ENCODE measurements at regions of chr1 and their contacts with region 1.

Region 1: DNA sequence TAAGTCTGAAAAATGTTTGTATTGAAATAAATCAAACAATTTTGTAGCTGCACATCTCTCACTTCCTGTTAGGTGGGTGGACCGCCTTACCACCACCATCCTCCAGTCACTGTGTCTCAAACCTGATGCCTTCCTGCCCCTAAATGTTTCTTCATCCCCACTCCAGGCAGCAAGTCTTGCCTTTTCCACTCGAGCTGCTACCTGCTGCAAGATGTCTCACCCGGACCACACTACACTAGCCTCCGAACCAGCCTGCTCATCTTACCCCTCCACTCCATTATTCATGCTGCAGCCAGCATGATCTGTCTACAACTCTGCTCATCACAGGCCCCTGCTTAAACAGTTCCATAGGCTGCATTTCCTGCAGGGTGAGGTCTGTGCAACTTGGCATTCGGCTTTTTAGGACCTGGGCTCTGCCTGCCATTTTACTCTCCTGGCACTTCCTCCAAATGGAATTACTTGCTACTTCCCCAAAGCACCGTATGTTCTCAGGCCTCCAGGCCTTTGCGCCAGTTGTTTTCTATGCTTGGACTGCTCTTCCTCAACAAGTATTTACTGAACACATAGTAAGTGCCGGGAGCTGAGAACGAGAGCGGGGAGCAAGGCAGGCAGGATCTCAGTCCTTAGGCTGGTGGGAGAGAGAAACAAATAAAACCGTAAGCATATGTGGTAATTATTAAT is 5.2 kb upstream of the SF3A3 start:
- DNase-seq: no peak
- ATAC-seq: no peak
- H3K4me3 ChIP-seq: peak overlapping the region in 6 of 10 donors; percentile 45 to 60 (median 56)
- H3K27ac ChIP-seq: peak overlapping the region in 9 of 10 donors; percentile 72 to 97 (median 83)
- H3K4me1 ChIP-seq: peaks cover 19 to 64% (median 49%) of the 10 kb centered on the region in 9 donors
- H3K27me3 ChIP-seq: no peaks in the 10 kb centered on the region
- CTCF ChIP-seq: no peak

Region 2: GRCh38 chr1:37133276-37134145 is 861.5 kb before region 1 on chr1:
- intact Hi-C with region 1: loop called in 1 of 10 experiments (anchors 5 kb)
- DNase-seq: no peak
- ATAC-seq: no peak
- H3K4me3 ChIP-seq: no peak overlapping the region
- H3K27ac ChIP-seq: no peak overlapping the region
- H3K4me1 ChIP-seq: no peaks in the 10 kb centered on the region
- H3K27me3 ChIP-seq: peaks cover 0 to 62% (median 32%) of the 10 kb centered on the region in 7 donors
- CTCF ChIP-seq: no peak

Region 3: GRCh38 chr1:37755290-37755689 is 239.7 kb before region 1 on chr1:
- intact Hi-C with region 1: no loop called
- DNase-seq: no peak
- ATAC-seq: no peak
- H3K4me3 ChIP-seq: no peak overlapping the region
- H3K27ac ChIP-seq: no peak overlapping the region
- H3K4me1 ChIP-seq: no peaks in the 10 kb centered on the region
- H3K27me3 ChIP-seq: peaks cover 0 to 93% (median 91%) of the 10 kb centered on the region in 7 donors
- CTCF ChIP-seq: no peak

Region 4: DNA sequence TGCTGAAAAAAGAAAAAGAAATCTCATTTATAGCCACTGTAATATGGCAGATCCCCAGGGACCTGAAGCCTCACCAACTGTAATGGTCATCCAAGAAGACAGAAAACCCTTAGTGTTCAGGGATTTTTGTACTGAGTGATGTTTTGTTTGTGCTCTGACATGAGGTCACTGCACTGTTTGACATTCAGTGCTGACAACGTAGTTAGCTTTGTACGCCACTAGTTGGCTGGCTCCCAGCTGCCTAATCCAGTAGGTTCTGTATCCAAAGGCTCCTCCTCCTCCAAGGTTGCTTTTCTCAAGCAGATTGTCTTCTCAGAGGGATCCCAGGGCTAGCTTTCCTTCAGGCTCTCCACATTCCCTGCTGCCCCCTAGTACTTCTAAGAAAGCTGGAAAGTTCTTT is 177.5 kb before region 1 on chr1:
- intact Hi-C with region 1: no loop called
- DNase-seq: peak; percentile 30 to 31
- ATAC-seq: peak in 4 of 8 donors; percentile 61 to 73 (median 64)
- H3K4me3 ChIP-seq: no peak overlapping the region
- H3K27ac ChIP-seq: peak overlapping the region in 1 of 10 donors; percentile 2
- H3K4me1 ChIP-seq: peaks cover 0 to 8% (median 4%) of the 10 kb centered on the region in 9 donors
- H3K27me3 ChIP-seq: no peaks in the 10 kb centered on the region
- CTCF ChIP-seq: no peak

Measured in heart right ventricle (tissue), 16 donors.